H1 (cell line): ENCODE measurements at regions of chr7 and their contacts with region 1.

Region 1: GRCh38 chr7:99408379-99409191 is at the starts of genes BUD31 and PDAP1:
- DNase-seq: peak; percentile 85 to 94
- H3K4me3 ChIP-seq: peak within 1 kb of the TSS; percentile 93 to 99 (median 97)
- H3K27ac ChIP-seq: peak within 1 kb of the TSS; percentile 100
- H3K4me1 ChIP-seq: peaks cover 0 to 5% (median 3%) of the 10 kb centered on the region in 4 experiments; a peak in 2 of 7 replicates
- H3K27me3 ChIP-seq: no peaks in the 10 kb centered on the region
- CTCF ChIP-seq: no peak
- EP300 ChIP-seq: 0 out of 3 replicates have a peak, but pooled peaks of 1 of the 2 experiments have one; percentile 4
- POLR2A ChIP-seq: peak; percentile 61 to 78
- RAD21 ChIP-seq: no peak
- total RNA-seq, gene BUD31: 114 and 121 TPM in 2 replicates
- total RNA-seq, gene PDAP1: 169 and 174 TPM in 2 replicates

Region 2: GRCh38 chr7:99235925-99236324 is 172.7 kb before region 1 on chr7:
- CTCF ChIA-PET with region 1: no interaction called
- POLR2A ChIA-PET with region 1: no interaction called
- DNase-seq: no peak
- H3K4me3 ChIP-seq: no peak overlapping the region
- H3K27ac ChIP-seq: no peak overlapping the region
- H3K4me1 ChIP-seq: no peaks in the 10 kb centered on the region
- H3K27me3 ChIP-seq: no peaks in the 10 kb centered on the region
- CTCF ChIP-seq: no peak
- EP300 ChIP-seq: no peak
- POLR2A ChIP-seq: no peak
- RAD21 ChIP-seq: no peak

Region 3: GRCh38 chr7:99331002-99331401 is 77.6 kb before region 1 on chr7:
- CTCF ChIA-PET with region 1: no interaction called
- POLR2A ChIA-PET with region 1: no interaction called
- DNase-seq: no peak
- H3K4me3 ChIP-seq: no peak overlapping the region
- H3K27ac ChIP-seq: no peak overlapping the region
- H3K4me1 ChIP-seq: no peaks in the 10 kb centered on the region; a peak in 1 of 7 replicates
- H3K27me3 ChIP-seq: no peaks in the 10 kb centered on the region
- CTCF ChIP-seq: no peak
- EP300 ChIP-seq: no peak
- POLR2A ChIP-seq: no peak
- RAD21 ChIP-seq: no peak

Region 4: GRCh38 chr7:99374103-99375064 is 34.2 kb before region 1 on chr7 and contains the start of gene ARPC1B:
- CTCF ChIA-PET with region 1: interaction called, 3 read pairs
- POLR2A ChIA-PET with region 1: interaction called, 29 read pairs
- DNase-seq: peak in 1 of 2 experiments; percentile 80
- H3K4me3 ChIP-seq: peak within 1 kb of the TSS; percentile 65 to 95 (median 70)
- H3K27ac ChIP-seq: no peak within 1 kb of the TSS; the same call in 1 of the 2 replicates
- H3K4me1 ChIP-seq: peaks cover 0 to 2% (median 0%) of the 10 kb centered on the region in 4 experiments; a peak in 2 of 7 replicates
- H3K27me3 ChIP-seq: no peaks in the 10 kb centered on the region
- CTCF ChIP-seq: no peak
- EP300 ChIP-seq: no peak
- POLR2A ChIP-seq: no peak; a peak in 1 of 3 replicates
- RAD21 ChIP-seq: no peak
- total RNA-seq, gene ARPC1B: 61.8 and 64.5 TPM in 2 replicates

Region 5: DNA sequence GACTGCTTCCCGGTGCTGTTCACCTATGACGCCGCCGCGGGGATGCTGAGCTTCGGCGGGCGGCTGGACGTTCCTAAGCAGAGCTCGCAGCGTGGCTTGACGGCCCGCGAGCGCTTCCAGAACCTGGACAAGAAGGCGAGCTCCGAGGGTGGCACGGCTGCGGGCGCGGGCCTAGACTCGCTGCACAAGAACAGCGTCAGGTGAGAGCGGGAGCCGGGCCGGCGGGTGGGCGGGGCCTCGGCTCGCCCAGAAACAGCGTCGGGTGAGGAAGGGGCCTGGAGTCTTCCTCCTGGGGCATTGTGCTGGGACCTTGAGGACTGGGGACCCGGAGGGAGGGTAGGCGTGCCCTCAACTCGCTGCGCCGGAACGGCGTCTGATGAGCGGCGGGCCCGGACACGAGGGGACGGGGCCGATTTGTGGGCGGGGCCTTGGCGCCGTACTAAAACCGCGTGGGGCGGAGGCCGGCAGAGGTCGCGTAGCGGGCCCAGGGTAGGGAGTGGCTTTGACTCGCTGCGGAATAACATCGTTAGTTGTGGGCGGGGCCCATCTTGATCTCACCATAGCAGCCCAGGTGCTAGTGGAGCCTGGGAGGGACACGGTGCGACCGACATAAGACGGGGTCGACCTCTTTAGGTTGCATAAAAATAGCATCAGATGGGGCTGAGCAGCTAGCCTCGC is 15.8 kb before region 1 on chr7:
- CTCF ChIA-PET with region 1: interaction called, 5 read pairs
- POLR2A ChIA-PET with region 1: interaction called, 150 read pairs
- DNase-seq: peak; percentile 61 to 91
- H3K4me3 ChIP-seq: peak overlapping the region; percentile 31 to 70 (median 62)
- H3K27ac ChIP-seq: peak overlapping the region; percentile 78
- H3K4me1 ChIP-seq: peaks cover 2 to 12% (median 5%) of the 10 kb centered on the region in 4 experiments; a peak in 6 of 7 replicates
- H3K27me3 ChIP-seq: no peaks in the 10 kb centered on the region
- CTCF ChIP-seq: no peak
- EP300 ChIP-seq: no peak
- POLR2A ChIP-seq: peak in 1 of 2 experiments; percentile 84; a peak in 1 of 3 replicates
- RAD21 ChIP-seq: no peak

Region 6: DNA sequence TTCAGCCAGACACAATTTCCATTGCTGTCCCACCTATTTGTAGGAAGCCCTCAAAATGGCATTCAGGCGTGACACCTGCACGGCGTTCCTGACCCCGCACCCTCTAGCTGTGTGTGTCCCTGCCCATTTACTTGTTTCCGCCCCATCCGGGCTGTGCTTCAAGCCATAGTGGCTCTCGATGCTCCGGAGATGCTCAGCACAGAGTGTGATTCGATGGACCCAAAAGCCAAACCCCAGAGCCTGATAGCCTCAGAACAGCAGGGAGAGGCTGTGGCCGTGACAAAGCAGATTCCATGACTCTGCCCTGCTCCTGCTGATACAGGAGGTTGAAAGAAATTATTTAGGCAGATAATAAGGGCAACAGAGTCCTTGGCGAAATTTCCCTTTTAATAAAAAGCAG is 13.6 kb after region 1 on chr7:
- CTCF ChIA-PET with region 1: interaction called, 8 read pairs
- POLR2A ChIA-PET with region 1: interaction called, 25 read pairs
- DNase-seq: no peak
- H3K4me3 ChIP-seq: no peak overlapping the region
- H3K27ac ChIP-seq: no peak overlapping the region
- H3K4me1 ChIP-seq: no peaks in the 10 kb centered on the region; a peak in 1 of 7 replicates
- H3K27me3 ChIP-seq: no peaks in the 10 kb centered on the region; a peak in 1 of 7 replicates
- CTCF ChIP-seq: no peak
- EP300 ChIP-seq: no peak
- POLR2A ChIP-seq: no peak
- RAD21 ChIP-seq: no peak

Region 7: DNA sequence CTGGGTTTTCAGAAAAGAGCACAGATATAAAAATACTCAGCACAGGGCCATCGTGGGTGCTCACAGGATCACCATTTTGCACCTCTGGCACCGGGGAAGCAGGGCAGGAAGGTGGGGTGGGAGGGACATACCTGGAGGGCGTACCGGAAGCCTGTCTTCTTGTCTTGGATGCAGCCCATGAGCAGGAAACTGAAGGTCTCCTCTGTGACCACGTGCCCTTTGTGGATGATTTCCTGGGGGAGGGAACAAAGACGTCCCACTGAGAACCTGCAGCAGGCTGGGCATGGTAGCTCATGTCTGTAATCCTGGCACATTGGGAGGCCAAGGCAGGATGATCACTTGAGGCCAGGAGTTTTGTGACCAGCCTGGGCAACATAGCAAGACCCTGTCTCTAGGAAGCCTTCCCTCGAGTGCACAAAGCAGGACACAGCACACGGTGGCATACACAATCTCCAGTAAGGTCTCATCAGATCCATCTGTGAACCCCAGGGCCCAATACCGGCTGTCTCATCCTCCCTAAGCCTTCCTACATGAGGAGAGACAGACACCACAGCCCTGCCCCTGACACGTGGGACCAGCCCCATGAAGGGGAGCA is 20.5 kb after region 1 on chr7:
- CTCF ChIA-PET with region 1: interaction called, 3 read pairs
- POLR2A ChIA-PET with region 1: interaction called, 25 read pairs
- DNase-seq: no peak
- H3K4me3 ChIP-seq: no peak overlapping the region
- H3K27ac ChIP-seq: no peak overlapping the region
- H3K4me1 ChIP-seq: no peaks in the 10 kb centered on the region
- H3K27me3 ChIP-seq: no peaks in the 10 kb centered on the region
- CTCF ChIP-seq: no peak
- EP300 ChIP-seq: no peak
- POLR2A ChIP-seq: no peak
- RAD21 ChIP-seq: no peak

Region 8: DNA sequence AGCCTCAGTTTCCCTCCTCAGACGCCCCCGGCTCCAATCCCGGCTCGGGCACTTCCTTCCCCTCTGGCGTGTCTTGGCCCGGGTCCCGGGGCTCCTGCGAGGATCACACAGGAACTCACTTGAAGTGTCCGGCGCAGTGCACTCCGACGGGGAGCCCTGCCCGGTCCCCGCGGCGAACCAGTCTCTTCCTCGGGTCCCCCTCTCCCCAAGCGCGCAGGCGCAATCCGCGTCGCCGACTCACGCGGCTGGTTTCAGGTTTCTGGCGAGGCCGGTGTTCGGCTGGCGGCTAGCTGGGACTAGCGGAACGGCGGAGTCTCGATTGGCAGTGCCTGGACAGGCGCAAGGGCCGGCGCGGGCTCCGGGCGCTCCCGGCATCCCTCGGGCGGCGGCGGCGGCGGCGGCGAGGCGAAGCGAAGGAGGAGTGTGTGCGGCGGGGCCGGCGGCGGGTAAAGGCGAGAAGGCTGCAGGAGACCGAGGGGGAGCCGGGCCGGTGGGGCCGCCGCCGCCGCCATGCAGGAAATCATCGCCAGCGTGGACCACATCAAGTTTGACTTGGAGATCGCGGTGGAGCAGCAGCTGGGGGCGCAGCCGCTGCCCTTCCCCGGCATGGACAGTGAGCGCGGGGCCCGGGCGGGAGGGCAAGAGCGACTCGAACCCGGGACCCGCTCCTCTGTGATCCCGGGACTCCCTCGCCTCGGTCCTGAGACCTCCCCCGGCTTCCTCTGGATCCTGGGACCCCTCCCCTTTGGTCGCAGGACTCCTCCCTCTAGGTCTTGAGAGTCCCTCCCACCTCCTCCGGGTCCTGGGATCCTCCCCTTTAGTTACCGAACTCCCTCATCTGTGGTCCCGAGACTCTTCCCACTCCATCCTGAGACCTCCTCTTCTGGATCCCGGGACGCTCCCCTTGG is 30.2 kb after region 1 on chr7 and contains the starts of genes CPSF4 and PTCD1:
- CTCF ChIA-PET with region 1: no interaction called
- POLR2A ChIA-PET with region 1: interaction called, 51 read pairs
- DNase-seq: peak; percentile 84 to 96
- H3K4me3 ChIP-seq: peak within 1 kb of the TSS; percentile 87 to 95 (median 88)
- H3K27ac ChIP-seq: peak within 1 kb of the TSS; percentile 93
- H3K4me1 ChIP-seq: peaks cover 0 to 12% (median 6%) of the 10 kb centered on the region in 4 experiments; a peak in 5 of 7 replicates
- H3K27me3 ChIP-seq: no peaks in the 10 kb centered on the region
- CTCF ChIP-seq: no peak
- EP300 ChIP-seq: peak in 1 of 2 experiments; percentile 49; a peak in 1 of 3 replicates
- POLR2A ChIP-seq: peak in 1 of 2 experiments; percentile 83; a peak in 2 of 3 replicates
- RAD21 ChIP-seq: no peak
- total RNA-seq, gene CPSF4: 74.8 and 77.5 TPM in 2 replicates
- total RNA-seq, gene PTCD1: 7.5 and 8.5 TPM in 2 replicates

Region 9: GRCh38 chr7:99459087-99459486 is 50.5 kb after region 1 on chr7:
- CTCF ChIA-PET with region 1: interaction called, 3 read pairs
- POLR2A ChIA-PET with region 1: interaction called, 11 read pairs
- DNase-seq: no peak
- H3K4me3 ChIP-seq: no peak overlapping the region
- H3K27ac ChIP-seq: no peak overlapping the region
- H3K4me1 ChIP-seq: no peaks in the 10 kb centered on the region; a peak in 1 of 7 replicates
- H3K27me3 ChIP-seq: no peaks in the 10 kb centered on the region
- CTCF ChIP-seq: peak; percentile 52 to 82 (median 61)
- EP300 ChIP-seq: no peak
- POLR2A ChIP-seq: peak; percentile 41 to 44; a peak in 1 of 3 replicates
- RAD21 ChIP-seq: peak; percentile 40 to 56; a peak in 3 of 4 replicates